ENCODE measurements at regions of chr10 and their contacts with region 1.

Region 1: GRCh38 chr10:14200698-14201544 is 129.8 kb downstream of the FRMD4A start:
- DNase-seq: no peak
- H3K4me3 Mint-ChIP-seq: no peak overlapping the region
- H3K27ac Mint-ChIP-seq: no peak overlapping the region
- H3K4me1 Mint-ChIP-seq: no peaks in the 10 kb centered on the region
- H3K27me3 Mint-ChIP-seq: peaks cover 13% of the 10 kb centered on the region

Region 2: GRCh38 chr10:14184841-14185315 is 16.0 kb before region 1 on chr10:
- intact Hi-C with region 1: no loop called
- DNase-seq: peak; percentile 44
- H3K4me3 Mint-ChIP-seq: peak overlapping the region; percentile 46
- H3K27ac Mint-ChIP-seq: peak overlapping the region; percentile 92
- H3K4me1 Mint-ChIP-seq: peaks cover 20% of the 10 kb centered on the region
- H3K27me3 Mint-ChIP-seq: peaks cover 49% of the 10 kb centered on the region

Region 3: GRCh38 chr10:14371581-14371980 is 170.7 kb after region 1 on chr10:
- intact Hi-C with region 1: no loop called
- DNase-seq: no peak
- H3K4me3 Mint-ChIP-seq: no peak overlapping the region
- H3K27ac Mint-ChIP-seq: no peak overlapping the region
- H3K4me1 Mint-ChIP-seq: no peaks in the 10 kb centered on the region
- H3K27me3 Mint-ChIP-seq: peaks cover 18% of the 10 kb centered on the region

Region 4: DNA sequence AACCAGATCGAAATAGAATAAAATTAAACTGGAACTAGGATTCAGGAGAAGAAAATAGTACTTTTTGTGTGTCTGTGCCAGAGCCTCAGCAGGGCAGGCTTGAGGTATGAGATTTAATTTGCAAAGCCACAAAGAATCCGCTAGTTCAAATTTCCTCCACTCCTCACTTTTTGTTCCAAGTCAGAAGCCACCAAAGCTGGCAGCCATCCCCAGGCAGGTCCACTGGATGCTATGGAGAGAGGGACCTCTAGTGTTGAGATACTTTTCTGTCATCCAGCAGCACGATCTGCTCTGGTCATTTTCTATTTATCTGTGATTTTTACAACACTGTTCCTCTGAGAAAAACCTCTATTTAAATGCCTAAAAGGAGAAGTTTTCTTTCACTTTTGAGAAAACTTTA is 277.7 kb after region 1 on chr10:
- intact Hi-C with region 1: loop called (anchors 1 kb)
- DNase-seq: no peak
- H3K4me3 Mint-ChIP-seq: no peak overlapping the region
- H3K27ac Mint-ChIP-seq: no peak overlapping the region
- H3K4me1 Mint-ChIP-seq: no peaks in the 10 kb centered on the region
- H3K27me3 Mint-ChIP-seq: peaks cover 29% of the 10 kb centered on the region

Region 5: GRCh38 chr10:14822879-14823755 is 622.2 kb after region 1 on chr10:
- intact Hi-C with region 1: loop called (anchors 1 kb)
- DNase-seq: no peak
- H3K4me3 Mint-ChIP-seq: no peak overlapping the region
- H3K27ac Mint-ChIP-seq: no peak overlapping the region
- H3K4me1 Mint-ChIP-seq: peaks cover 22% of the 10 kb centered on the region
- H3K27me3 Mint-ChIP-seq: peaks cover 9% of the 10 kb centered on the region

Measured in activated T-helper 1 cell treated with anti-CD3 and anti-CD28 coated beads, Interleukin-12 subunit alpha, Interleukin-12 subunit beta, Interleukin-2, Interleukin-4 antibody, amounts not matched to agents 30 ng/mL and 10 ng/mL and 1 ng/mL, durations not matched to agents 14 hours and 24 hours and 36 hours (primary cell).